ENCODE measurements at regions of chrX and their contacts with region 1.

Region 1: DNA sequence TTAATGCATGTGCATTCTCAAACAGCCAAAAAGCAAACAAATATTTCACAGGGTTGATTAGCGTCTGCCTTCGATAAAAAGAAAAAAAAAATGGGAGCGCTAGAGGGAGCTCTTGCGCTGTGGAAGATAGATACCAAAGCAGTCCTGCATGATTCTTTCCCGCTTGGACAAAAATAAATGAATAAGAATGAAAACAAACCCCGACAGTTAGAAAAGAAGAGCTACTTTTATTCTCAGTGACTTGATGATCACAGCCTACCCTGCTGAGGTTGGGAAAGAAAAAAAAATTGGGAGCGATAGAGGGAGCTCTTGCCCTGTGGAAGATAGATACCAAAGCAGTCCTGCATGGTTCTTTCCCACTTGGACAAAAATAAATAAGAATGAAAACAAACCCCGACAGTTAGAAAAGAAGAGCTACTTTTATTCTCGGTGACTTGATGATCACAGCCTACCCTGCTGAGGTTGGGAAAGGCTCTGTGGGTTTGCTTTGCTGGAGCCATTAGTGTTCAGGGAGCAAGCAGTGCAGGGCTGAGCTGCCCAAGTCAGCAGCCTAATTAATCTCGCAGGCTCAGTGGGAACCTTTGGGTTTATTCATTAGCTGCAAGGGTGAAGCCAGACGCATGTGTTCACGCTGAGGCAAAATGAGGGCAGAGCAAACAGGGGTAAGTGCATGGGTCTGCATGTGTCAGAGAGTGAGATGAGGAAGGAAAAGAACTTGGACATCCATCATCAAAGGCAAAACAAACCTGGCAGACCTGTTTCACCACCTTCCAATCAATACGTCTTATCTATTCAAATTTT is 249.3 kb upstream of the PRKX start:
- DNase-seq: peak; percentile 7

Region 2: DNA sequence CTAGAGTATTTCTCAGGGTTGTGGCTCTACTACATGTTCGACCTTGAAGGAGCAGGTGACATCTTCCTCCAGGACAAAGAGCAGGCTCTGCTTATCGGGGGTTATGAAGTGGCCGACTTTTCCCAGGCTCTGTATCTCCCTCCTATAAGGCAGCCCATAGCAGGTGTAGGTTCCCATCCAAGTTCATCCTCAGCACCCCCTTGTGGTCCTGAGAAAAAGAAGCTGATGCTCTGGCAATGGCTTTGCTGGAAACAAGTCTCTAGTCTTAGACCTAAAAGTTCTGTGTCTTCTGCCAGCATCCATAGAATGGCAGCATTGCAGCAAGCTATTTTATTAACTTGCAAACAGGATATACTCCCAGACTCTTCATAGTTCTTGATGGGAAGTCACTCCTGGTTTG is 587.3 kb after region 1 on chrX:
- CTCF ChIA-PET with region 1: interaction called, 12 read pairs
- POLR2A ChIA-PET with region 1: no interaction called
- DNase-seq: peak; percentile 5

Measured in HEK293T (cell line).